Activated T-helper 1 cell treated with anti-CD3 and anti-CD28 coated beads, Interleukin-12 subunit alpha, Interleukin-12 subunit beta, Interleukin-2, Interleukin-4 antibody, amounts not matched to agents 30 ng/mL and 10 ng/mL and 1 ng/mL, durations not matched to agents 14 hours and 24 hours and 36 hours (primary cell): ENCODE measurements at regions of chr1 and their contacts with region 1.

Region 1: GRCh38 chr1:247078261-247079140 is at the start of gene ZNF670:
- DNase-seq: peak; percentile 81
- H3K4me3 Mint-ChIP-seq: peak within 1 kb of the TSS; percentile 89
- H3K27ac Mint-ChIP-seq: peak within 1 kb of the TSS; percentile 75
- H3K4me1 Mint-ChIP-seq: peaks cover 25% of the 10 kb centered on the region
- H3K27me3 Mint-ChIP-seq: peaks cover 2% of the 10 kb centered on the region
- total RNA-seq, gene ZNF670: 2.5 and 2.9 TPM in 2 replicates

Region 2: DNA sequence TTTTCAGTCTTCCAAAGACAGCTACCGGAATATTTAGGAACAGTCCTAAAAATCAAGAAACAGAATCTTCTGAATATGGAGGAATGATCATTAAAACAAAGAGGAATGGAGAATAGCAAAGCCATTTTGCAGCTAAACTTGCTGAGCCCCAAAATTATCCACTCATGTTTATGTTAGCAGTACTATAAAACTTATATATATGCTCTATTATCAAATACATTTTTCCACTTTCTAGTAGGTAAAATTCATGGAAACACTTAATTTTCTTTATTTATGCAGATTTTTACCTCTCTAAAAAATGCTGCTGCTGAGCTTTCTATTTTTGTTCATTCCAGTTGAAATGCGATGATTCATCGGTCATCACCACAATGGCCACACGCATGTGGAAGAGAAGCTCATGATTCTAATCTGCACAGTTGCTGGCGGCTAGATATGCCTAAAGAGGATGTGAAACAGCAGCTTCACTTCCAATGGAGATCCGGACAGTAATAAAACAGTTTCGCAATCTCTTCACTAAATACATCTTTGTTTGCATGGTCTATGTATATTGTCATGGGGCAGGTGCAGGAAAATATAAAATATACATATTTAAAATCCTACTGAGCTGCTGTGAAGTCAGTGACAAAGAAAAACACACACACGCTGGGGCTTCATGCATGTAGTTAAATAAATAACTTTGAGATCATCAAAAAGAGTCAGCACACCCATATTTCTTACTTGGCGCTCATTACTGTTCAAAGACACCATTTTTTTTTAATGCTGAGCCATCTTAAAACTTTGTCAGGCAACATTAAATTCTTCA is 863.6 kb before region 1 on chr1:
- intact Hi-C with region 1: no loop called
- DNase-seq: no peak
- H3K4me3 Mint-ChIP-seq: no peak overlapping the region
- H3K27ac Mint-ChIP-seq: no peak overlapping the region
- H3K4me1 Mint-ChIP-seq: no peaks in the 10 kb centered on the region
- H3K27me3 Mint-ChIP-seq: no peaks in the 10 kb centered on the region

Region 3: DNA sequence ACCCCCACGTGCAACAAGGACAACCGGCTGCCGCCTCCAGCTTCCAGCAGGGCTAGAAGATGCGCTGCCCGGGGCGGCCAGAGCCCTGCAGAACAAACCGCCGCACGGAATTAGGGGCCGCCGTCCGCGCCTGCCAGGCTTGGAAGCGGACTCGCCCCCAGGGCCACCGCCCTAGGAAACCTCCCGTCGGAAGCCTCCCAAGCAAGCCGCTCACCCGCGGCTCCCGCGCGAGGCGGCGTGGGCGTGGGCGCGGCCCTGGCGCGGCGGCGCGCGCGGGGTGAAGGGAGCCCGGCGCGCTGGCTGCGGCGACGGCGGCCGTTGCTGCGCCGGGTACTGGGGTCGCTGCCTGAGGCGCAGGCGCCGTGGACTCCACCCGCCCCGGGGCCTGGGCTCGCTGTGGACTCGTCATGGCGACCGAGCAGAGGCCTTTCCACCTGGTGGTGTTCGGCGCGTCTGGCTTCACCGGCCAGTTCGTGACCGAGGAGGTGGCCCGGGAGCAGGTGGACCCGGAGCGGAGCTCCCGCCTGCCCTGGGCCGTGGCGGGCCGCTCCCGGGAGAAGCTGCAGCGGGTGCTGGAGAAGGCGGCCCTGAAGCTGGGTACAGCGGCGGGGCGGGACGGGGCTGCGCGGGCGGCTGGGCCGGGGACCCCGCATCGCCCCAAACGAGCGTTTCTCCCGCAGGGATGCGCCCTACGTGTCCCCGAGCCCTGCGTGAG is 354.3 kb before region 1 on chr1 and contains the start of gene SCCPDH:
- intact Hi-C with region 1: loop called (anchors 5 kb)
- DNase-seq: peak; percentile 55
- H3K4me3 Mint-ChIP-seq: peak within 1 kb of the TSS; percentile 92
- H3K27ac Mint-ChIP-seq: peak within 1 kb of the TSS; percentile 78
- H3K4me1 Mint-ChIP-seq: peaks cover 10% of the 10 kb centered on the region
- H3K27me3 Mint-ChIP-seq: peaks cover 6% of the 10 kb centered on the region
- total RNA-seq, gene SCCPDH: 23.5 and 24.3 TPM in 2 replicates

Region 4: GRCh38 chr1:246815693-246816270 is 262.7 kb before region 1 on chr1:
- intact Hi-C with region 1: no loop called
- DNase-seq: no peak
- H3K4me3 Mint-ChIP-seq: no peak overlapping the region
- H3K27ac Mint-ChIP-seq: no peak overlapping the region
- H3K4me1 Mint-ChIP-seq: no peaks in the 10 kb centered on the region
- H3K27me3 Mint-ChIP-seq: peaks cover 6% of the 10 kb centered on the region

Region 5: GRCh38 chr1:246893191-246893939 is 185.1 kb before region 1 on chr1:
- intact Hi-C with region 1: no loop called
- DNase-seq: no peak
- H3K4me3 Mint-ChIP-seq: no peak overlapping the region
- H3K27ac Mint-ChIP-seq: peak overlapping the region; percentile 70
- H3K4me1 Mint-ChIP-seq: peaks cover 17% of the 10 kb centered on the region
- H3K27me3 Mint-ChIP-seq: no peaks in the 10 kb centered on the region

Region 6: GRCh38 chr1:247103859-247104591 is 25.5 kb after region 1 on chr1 and contains the start of gene ZNF669:
- intact Hi-C with region 1: loop called (anchors 1 kb)
- DNase-seq: peak; percentile 86
- H3K4me3 Mint-ChIP-seq: peak within 1 kb of the TSS; percentile 91
- H3K27ac Mint-ChIP-seq: peak within 1 kb of the TSS; percentile 74
- H3K4me1 Mint-ChIP-seq: peaks cover 15% of the 10 kb centered on the region
- H3K27me3 Mint-ChIP-seq: peaks cover 14% of the 10 kb centered on the region
- total RNA-seq, gene ZNF669: 8.0 and 9.5 TPM in 2 replicates

Region 7: GRCh38 chr1:247331172-247331991 is 252.9 kb after region 1 on chr1 and contains the start of gene ZNF496:
- intact Hi-C with region 1: loop called (anchors 2 kb)
- DNase-seq: peak; percentile 65
- H3K4me3 Mint-ChIP-seq: peak within 1 kb of the TSS; percentile 92
- H3K27ac Mint-ChIP-seq: peak within 1 kb of the TSS; percentile 90
- H3K4me1 Mint-ChIP-seq: peaks cover 21% of the 10 kb centered on the region
- H3K27me3 Mint-ChIP-seq: no peaks in the 10 kb centered on the region
- total RNA-seq, gene ZNF496: 13.8 and 14.8 TPM in 2 replicates